Calu3 (cell line): ENCODE measurements at regions of chr17 and their contacts with region 1.

Region 1: DNA sequence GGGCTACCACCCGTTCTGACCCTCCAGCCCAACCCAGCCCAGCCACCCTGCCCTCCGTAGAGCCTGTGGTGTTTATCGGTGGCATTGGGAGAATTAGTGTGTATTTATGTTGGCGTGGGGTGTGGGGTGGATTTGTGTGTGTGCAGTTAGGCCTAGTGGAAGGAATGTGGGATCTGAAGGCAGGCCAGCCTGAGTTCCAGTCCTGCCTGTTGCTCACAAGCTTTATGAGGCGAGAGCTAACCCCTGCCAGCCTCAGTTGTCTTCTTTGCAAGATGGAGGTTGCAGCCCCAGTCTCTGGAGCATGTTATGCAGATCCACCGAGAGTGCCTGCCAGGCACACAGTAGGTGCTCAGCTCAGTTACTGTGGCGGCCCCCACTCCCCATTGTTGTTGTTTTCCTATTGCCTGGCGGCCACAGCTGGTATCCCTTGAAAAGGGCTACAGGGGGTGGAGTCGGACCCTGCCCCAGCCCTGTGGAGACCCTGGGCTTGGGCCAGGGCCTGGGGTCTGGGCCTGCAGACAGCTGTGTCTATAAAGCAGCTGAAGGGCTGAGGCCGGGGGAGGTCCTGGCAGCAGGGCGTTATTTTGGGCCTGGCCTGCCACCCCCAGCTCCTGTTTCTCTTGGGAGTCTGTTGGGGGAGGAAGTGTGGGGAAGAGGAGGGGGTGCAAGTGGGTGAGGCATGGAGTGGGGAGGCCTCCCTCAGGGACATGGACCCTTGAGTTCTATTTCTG is 5.1 kb downstream of the ERBB2 start:
- DNase-seq: peak; percentile 99
- H3K4me3 Mint-ChIP-seq: peak overlapping the region; percentile 71
- H3K27ac Mint-ChIP-seq: peak overlapping the region; percentile 67
- H3K4me1 Mint-ChIP-seq: peaks cover 92% of the 10 kb centered on the region
- H3K27me3 Mint-ChIP-seq: no peaks in the 10 kb centered on the region
- CTCF ChIP-seq: no peak

Region 2: DNA sequence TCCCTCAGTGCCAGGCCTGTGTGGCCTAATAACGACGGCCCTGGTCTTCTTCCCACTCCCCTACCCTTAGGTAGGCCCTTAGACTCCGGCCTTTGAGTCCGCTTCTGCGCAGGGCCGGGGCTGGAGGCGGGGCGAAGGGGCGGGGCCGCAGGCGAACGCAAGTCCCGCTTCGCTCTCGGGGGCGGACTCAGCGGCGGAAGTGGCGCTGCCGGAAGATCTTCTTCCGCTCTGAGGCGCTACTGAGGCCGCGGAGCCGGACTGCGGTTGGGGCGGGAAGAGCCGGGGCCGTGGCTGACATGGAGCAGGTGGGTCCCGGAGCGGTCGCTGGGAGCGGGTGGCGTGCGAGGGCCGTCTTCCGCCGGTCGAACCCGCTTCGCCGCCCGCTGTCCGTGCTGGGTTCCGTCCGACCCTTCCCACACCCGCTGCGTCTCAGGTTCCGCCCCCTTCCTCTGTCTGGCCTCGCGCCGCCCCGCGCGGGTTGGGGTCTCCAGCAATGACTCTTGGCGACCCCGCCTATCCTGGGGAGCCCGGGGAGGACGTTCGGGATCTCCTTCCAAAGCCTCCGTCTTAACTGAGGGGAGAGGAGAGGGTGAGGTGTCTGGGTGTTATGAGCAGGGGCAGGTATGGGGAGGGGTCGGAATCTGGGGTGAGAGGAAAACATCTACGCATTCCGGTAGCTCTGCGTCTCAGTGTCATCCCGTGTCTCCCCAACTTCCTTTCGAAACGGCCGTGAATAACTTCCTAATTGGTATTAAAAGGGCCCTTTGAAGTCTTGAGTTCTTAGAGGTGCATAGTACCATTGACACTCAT is 67.9 kb before region 1 on chr17 and contains the start of gene STARD3:
- CTCF ChIA-PET with region 1: interaction called, 42,089 read pairs
- intact Hi-C with region 1: loop called (anchors 1 kb)
- DNase-seq: no peak
- H3K4me3 Mint-ChIP-seq: peak within 1 kb of the TSS; percentile 71
- H3K27ac Mint-ChIP-seq: peak within 1 kb of the TSS; percentile 28
- H3K4me1 Mint-ChIP-seq: peaks cover 61% of the 10 kb centered on the region
- H3K27me3 Mint-ChIP-seq: peaks cover 5% of the 10 kb centered on the region
- CTCF ChIP-seq: no peak
- total RNA-seq, gene STARD3: 2,579 and 2,697 TPM in 2 replicates

Region 3: GRCh38 chr17:39676198-39676819 is 28.7 kb before region 1 on chr17:
- CTCF ChIA-PET with region 1: interaction called, 34,714 read pairs
- intact Hi-C with region 1: loop called (anchors 1 kb)
- DNase-seq: peak; percentile 100
- H3K4me3 Mint-ChIP-seq: peak overlapping the region; percentile 3
- H3K27ac Mint-ChIP-seq: peak overlapping the region; percentile 62
- H3K4me1 Mint-ChIP-seq: peaks cover 91% of the 10 kb centered on the region
- H3K27me3 Mint-ChIP-seq: peaks cover 6% of the 10 kb centered on the region
- CTCF ChIP-seq: no peak

Region 4: DNA sequence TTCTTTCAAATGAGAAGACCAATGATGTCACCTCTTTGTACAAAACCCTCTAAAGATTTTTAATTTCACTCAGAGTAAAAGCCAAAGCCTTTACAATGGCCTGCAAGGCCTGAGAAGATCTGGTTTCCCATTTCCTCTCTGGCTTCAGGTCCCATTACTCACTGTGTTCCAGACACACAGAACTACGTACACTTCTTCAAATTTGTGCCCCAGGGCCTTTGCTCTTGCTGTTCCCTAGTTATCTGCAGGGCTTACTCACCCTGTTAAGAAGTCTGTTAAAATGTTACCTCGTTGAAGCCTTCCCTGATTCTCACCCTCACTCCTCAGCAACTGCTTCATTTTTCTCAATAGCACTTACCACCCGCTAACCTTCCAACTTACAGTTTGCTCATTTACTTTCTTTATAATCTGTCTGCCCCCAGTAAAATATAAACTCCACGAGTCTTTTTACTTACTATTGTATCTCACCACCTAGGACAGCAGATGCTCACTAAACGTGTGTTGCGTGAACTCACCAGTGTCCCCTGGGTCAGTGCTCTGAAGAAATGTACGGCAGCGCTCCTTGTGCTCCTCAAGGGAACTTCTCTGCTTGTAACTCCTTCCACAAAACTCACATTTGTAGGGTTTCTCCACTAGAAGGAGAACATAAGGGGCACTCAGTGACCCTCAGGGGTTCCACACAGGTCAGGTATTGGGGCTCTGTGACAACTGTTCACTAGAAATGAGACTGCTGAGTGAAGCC is 82.9 kb after region 1 on chr17:
- CTCF ChIA-PET with region 1: interaction called, 34,714 read pairs
- intact Hi-C with region 1: no loop called
- DNase-seq: peak; percentile 80
- H3K4me3 Mint-ChIP-seq: no peak overlapping the region
- H3K27ac Mint-ChIP-seq: no peak overlapping the region
- H3K4me1 Mint-ChIP-seq: peaks cover 29% of the 10 kb centered on the region
- H3K27me3 Mint-ChIP-seq: no peaks in the 10 kb centered on the region
- CTCF ChIP-seq: no peak

Region 5: DNA sequence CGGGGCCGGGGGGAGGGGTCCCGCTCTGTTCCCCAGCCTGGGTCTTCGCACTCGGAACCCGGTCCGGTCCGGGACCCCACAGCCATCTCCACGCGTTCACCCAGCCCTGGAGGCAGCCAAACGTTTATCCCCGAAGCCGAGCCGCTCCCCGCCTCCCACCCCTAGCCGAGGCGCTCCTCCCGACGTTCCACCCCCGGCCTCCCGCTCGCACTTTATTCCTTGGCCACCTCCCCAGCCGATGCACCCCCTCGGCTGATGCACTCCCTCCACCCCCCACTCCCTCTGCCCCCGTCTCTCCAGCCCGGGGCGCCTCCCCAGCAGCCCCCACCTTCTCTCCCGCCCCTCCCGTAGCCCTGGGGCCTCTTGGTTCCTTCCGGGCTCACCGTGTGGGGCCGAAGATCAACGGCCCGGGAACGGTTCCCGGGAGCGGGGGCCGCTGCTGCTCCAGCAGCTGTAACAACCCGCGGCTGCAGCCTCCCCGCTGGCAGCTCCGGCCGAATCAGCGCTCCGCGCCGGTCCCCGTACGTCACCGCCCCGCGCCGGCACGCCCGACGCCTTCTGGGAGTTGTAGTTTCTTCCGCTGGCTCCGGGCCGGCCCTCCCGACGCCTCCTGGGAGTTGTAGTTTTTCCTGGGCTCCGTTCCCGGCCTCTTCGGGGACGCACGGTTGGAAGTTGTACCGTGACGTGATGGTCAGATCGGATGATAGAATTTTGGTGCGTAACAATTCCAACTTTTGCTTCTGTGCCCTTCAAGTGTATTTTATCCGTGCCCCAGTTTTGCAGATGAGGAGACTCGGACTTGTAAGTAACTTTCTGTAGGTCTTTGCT is 222.3 kb after region 1 on chr17 and contains the starts of genes LRRC3C and ORMDL3:
- CTCF ChIA-PET with region 1: interaction called, 8,195 read pairs
- intact Hi-C with region 1: loop called (anchors 1 kb)
- DNase-seq: no peak
- H3K4me3 Mint-ChIP-seq: peak within 1 kb of the TSS; percentile 74
- H3K27ac Mint-ChIP-seq: peak within 1 kb of the TSS; percentile 66
- H3K4me1 Mint-ChIP-seq: peaks cover 60% of the 10 kb centered on the region
- H3K27me3 Mint-ChIP-seq: no peaks in the 10 kb centered on the region
- CTCF ChIP-seq: no peak
- total RNA-seq, gene LRRC3C: not detected in 2 replicates
- total RNA-seq, gene ORMDL3: 1,738 and 1,968 TPM in 2 replicates

Region 6: GRCh38 chr17:40021451-40021971 is 316.5 kb after region 1 on chr17:
- CTCF ChIA-PET with region 1: interaction called, 13 read pairs
- intact Hi-C with region 1: no loop called
- DNase-seq: peak; percentile 88
- H3K4me3 Mint-ChIP-seq: no peak overlapping the region
- H3K27ac Mint-ChIP-seq: no peak overlapping the region
- H3K4me1 Mint-ChIP-seq: peaks cover 36% of the 10 kb centered on the region
- H3K27me3 Mint-ChIP-seq: peaks cover 23% of the 10 kb centered on the region
- CTCF ChIP-seq: no peak

Region 7: DNA sequence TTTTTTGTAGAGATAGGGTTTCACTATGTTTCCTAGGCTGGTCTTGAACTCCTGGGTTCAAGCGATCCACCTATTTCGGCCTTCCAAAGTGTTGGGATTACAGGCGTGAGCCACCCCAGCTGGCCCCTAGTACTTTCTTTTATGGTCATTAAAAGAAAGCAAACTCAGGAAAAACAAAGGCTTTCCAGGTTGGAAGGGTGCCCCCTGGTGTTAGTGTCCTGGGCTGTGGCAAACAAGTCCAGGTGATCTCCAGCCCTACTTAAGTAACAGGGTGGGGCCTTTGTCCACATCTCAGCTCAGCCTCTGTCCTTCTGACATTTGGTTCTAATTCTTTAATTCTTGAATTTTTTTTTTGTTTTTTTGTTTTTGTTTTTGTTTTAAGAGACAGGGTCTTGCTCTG is 745.2 kb after region 1 on chr17:
- CTCF ChIA-PET with region 1: interaction called, 12 read pairs
- intact Hi-C with region 1: no loop called
- DNase-seq: peak; percentile 100
- H3K4me3 Mint-ChIP-seq: no peak overlapping the region
- H3K27ac Mint-ChIP-seq: no peak overlapping the region
- H3K4me1 Mint-ChIP-seq: peaks cover 48% of the 10 kb centered on the region
- H3K27me3 Mint-ChIP-seq: peaks cover 17% of the 10 kb centered on the region
- CTCF ChIP-seq: no peak